Activated CD8-positive, alpha-beta T cell treated with anti-CD3 and anti-CD28 coated beads, Interleukin-2, amount 10 ng/mL, durations not matched to agents 7 days and 5 days (primary cell): ENCODE measurements at regions of chr1 and their contacts with region 1.

Region 1: GRCh38 chr1:153633716-153634665 is at the start of gene CHTOP:
- DNase-seq: peak; percentile 98
- ATAC-seq: peak; percentile 94
- H3K4me3 Mint-ChIP-seq: peak within 1 kb of the TSS; percentile 99
- H3K27ac Mint-ChIP-seq: peak within 1 kb of the TSS; percentile 100
- H3K4me1 Mint-ChIP-seq: peaks cover 39% of the 10 kb centered on the region
- H3K27me3 Mint-ChIP-seq: no peaks in the 10 kb centered on the region
- total RNA-seq, gene CHTOP: 81.9 to 82.0 TPM

Region 2: GRCh38 chr1:153288634-153289275 is 345.2 kb before region 1 on chr1:
- CTCF ChIA-PET with region 1: no interaction called
- POLR2A ChIA-PET with region 1: no interaction called
- DNase-seq: no peak
- ATAC-seq: peak; percentile 51
- H3K4me3 Mint-ChIP-seq: no peak overlapping the region
- H3K27ac Mint-ChIP-seq: no peak overlapping the region
- H3K4me1 Mint-ChIP-seq: peaks cover 11% of the 10 kb centered on the region
- H3K27me3 Mint-ChIP-seq: peaks cover 9% of the 10 kb centered on the region

Region 3: GRCh38 chr1:153532769-153533599 is 101.0 kb before region 1 on chr1:
- CTCF ChIA-PET with region 1: interaction called, 11 read pairs
- POLR2A ChIA-PET with region 1: interaction called, 19 read pairs
- DNase-seq: peak; percentile 86
- ATAC-seq: peak; percentile 29
- H3K4me3 Mint-ChIP-seq: peak overlapping the region; percentile 98
- H3K27ac Mint-ChIP-seq: peak overlapping the region; percentile 90
- H3K4me1 Mint-ChIP-seq: peaks cover 63% of the 10 kb centered on the region
- H3K27me3 Mint-ChIP-seq: no peaks in the 10 kb centered on the region

Region 4: GRCh38 chr1:153617675-153618074 is 16.3 kb before region 1 on chr1:
- CTCF ChIA-PET with region 1: interaction called, 51 read pairs
- POLR2A ChIA-PET with region 1: interaction called, 15 read pairs
- DNase-seq: peak; percentile 86
- ATAC-seq: peak; percentile 98
- H3K4me3 Mint-ChIP-seq: no peak overlapping the region
- H3K27ac Mint-ChIP-seq: peak overlapping the region; percentile 30
- H3K4me1 Mint-ChIP-seq: peaks cover 9% of the 10 kb centered on the region
- H3K27me3 Mint-ChIP-seq: no peaks in the 10 kb centered on the region

Region 5: GRCh38 chr1:153658400-153659174 is 24.6 kb after region 1 on chr1 and contains the start of gene SNAPIN:
- CTCF ChIA-PET with region 1: interaction called, 3 read pairs
- POLR2A ChIA-PET with region 1: interaction called, 25 read pairs
- DNase-seq: peak; percentile 94
- ATAC-seq: peak; percentile 98
- H3K4me3 Mint-ChIP-seq: peak within 1 kb of the TSS; percentile 98
- H3K27ac Mint-ChIP-seq: peak within 1 kb of the TSS; percentile 94
- H3K4me1 Mint-ChIP-seq: peaks cover 17% of the 10 kb centered on the region
- H3K27me3 Mint-ChIP-seq: no peaks in the 10 kb centered on the region
- total RNA-seq, gene SNAPIN: 36.5 to 37.7 TPM

Region 6: DNA sequence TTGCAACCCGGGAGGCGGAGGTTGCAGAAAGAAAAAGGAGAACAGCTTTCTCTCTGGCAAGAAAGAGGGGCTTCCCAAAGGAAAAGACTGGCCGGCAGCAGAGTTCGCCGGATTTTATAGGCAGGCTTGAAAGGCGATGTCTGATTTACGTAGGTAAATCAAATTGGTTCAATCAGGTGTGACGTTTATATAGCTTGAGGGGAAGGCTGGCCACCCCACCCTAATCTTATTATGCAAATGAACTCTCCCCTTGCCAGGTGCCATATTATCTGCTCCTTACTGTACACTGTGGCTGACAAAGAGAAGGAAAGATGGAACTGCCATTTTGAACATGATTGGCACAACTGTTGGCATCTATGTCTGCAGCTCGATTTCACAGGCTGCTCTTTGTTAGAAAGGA is 77.0 kb after region 1 on chr1:
- CTCF ChIA-PET with region 1: no interaction called
- POLR2A ChIA-PET with region 1: no interaction called
- DNase-seq: no peak
- ATAC-seq: no peak
- H3K4me3 Mint-ChIP-seq: no peak overlapping the region
- H3K27ac Mint-ChIP-seq: no peak overlapping the region
- H3K4me1 Mint-ChIP-seq: peaks cover 5% of the 10 kb centered on the region
- H3K27me3 Mint-ChIP-seq: peaks cover 2% of the 10 kb centered on the region

Region 7: GRCh38 chr1:153727463-153728304 is 93.7 kb after region 1 on chr1 and contains the start of gene INTS3:
- CTCF ChIA-PET with region 1: no interaction called
- POLR2A ChIA-PET with region 1: interaction called, 10 read pairs
- DNase-seq: peak; percentile 100
- ATAC-seq: peak; percentile 100
- H3K4me3 Mint-ChIP-seq: peak within 1 kb of the TSS; percentile 93
- H3K27ac Mint-ChIP-seq: peak within 1 kb of the TSS; percentile 94
- H3K4me1 Mint-ChIP-seq: peaks cover 32% of the 10 kb centered on the region
- H3K27me3 Mint-ChIP-seq: no peaks in the 10 kb centered on the region
- total RNA-seq, gene INTS3: 53.7 to 54.5 TPM